Activated CD4-positive, alpha-beta memory T cell treated with anti-CD3 and anti-CD28 coated beads, Interleukin-2, amount 10 ng/mL, durations not matched to agents 7 days and 5 days (primary cell): ENCODE measurements at regions of chr11 and their contacts with region 1.

Region 1: GRCh38 chr11:102341844-102342318 is 5.1 kb upstream of the BIRC2 start:
- DNase-seq: peak; percentile 72
- H3K4me3 Mint-ChIP-seq: no peak overlapping the region
- H3K27ac Mint-ChIP-seq: no peak overlapping the region
- H3K4me1 Mint-ChIP-seq: peaks cover 20% of the 10 kb centered on the region
- H3K27me3 Mint-ChIP-seq: no peaks in the 10 kb centered on the region

Region 2: DNA sequence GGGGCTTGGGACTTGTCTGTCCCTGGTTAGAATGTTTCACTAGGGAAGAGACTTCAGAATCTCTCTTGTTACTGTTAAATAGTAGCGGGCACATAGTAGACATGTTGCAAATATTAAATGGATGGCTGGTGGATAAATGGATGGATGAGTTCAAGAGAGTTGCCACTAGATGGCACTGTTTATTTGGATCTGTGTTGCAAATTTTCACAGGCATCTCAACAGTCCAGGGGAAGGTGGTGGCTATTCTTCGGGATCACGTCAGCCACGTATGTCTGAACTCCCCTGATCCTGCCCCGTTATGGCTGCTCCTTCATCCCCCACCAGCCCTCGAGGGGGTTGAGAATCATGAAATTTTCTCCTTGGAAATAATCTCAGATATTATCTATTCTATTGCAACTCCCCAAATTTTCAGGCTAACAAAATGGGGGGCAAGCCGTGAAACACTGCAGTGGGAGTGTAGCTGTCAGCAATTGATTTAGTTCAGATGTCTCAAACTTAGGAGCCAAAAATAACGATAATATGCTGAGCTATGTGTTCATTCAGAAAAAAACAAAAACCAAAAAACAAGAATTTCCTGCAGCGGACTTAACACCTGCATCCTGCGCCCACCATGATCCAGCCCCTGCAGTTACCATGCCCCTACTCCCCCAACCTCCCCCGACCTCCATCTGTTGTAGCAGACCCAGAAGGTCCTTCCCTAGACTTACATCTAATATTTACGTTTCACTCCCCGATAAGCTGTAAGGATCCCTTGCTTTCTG is 53.7 kb before region 1 on chr11:
- CTCF ChIA-PET with region 1: interaction called, 53 read pairs
- POLR2A ChIA-PET with region 1: interaction called, 6 read pairs
- DNase-seq: no peak
- H3K4me3 Mint-ChIP-seq: no peak overlapping the region
- H3K27ac Mint-ChIP-seq: no peak overlapping the region
- H3K4me1 Mint-ChIP-seq: peaks cover 17% of the 10 kb centered on the region
- H3K27me3 Mint-ChIP-seq: no peaks in the 10 kb centered on the region

Region 3: GRCh38 chr11:102317099-102317767 is 24.6 kb before region 1 on chr11 and contains the start of gene BIRC3:
- CTCF ChIA-PET with region 1: interaction called, 31 read pairs
- POLR2A ChIA-PET with region 1: interaction called, 4 read pairs
- DNase-seq: peak; percentile 92
- H3K4me3 Mint-ChIP-seq: peak within 1 kb of the TSS; percentile 94
- H3K27ac Mint-ChIP-seq: peak within 1 kb of the TSS; percentile 91
- H3K4me1 Mint-ChIP-seq: peaks cover 69% of the 10 kb centered on the region
- H3K27me3 Mint-ChIP-seq: no peaks in the 10 kb centered on the region
- total RNA-seq, gene BIRC3: 79.0 to 80.0 TPM

Region 4: GRCh38 chr11:102367364-102367763 is 25.5 kb after region 1 on chr11:
- CTCF ChIA-PET with region 1: interaction called, 21 read pairs
- POLR2A ChIA-PET with region 1: interaction called, 5 read pairs
- DNase-seq: no peak
- H3K4me3 Mint-ChIP-seq: no peak overlapping the region
- H3K27ac Mint-ChIP-seq: no peak overlapping the region
- H3K4me1 Mint-ChIP-seq: peaks cover 25% of the 10 kb centered on the region
- H3K27me3 Mint-ChIP-seq: no peaks in the 10 kb centered on the region

Region 5: GRCh38 chr11:102396708-102397563 is 55.1 kb after region 1 on chr11:
- CTCF ChIA-PET with region 1: interaction called, 14 read pairs
- POLR2A ChIA-PET with region 1: no interaction called
- DNase-seq: no peak
- H3K4me3 Mint-ChIP-seq: no peak overlapping the region
- H3K27ac Mint-ChIP-seq: peak overlapping the region; percentile 52
- H3K4me1 Mint-ChIP-seq: peaks cover 20% of the 10 kb centered on the region
- H3K27me3 Mint-ChIP-seq: no peaks in the 10 kb centered on the region

Region 6: DNA sequence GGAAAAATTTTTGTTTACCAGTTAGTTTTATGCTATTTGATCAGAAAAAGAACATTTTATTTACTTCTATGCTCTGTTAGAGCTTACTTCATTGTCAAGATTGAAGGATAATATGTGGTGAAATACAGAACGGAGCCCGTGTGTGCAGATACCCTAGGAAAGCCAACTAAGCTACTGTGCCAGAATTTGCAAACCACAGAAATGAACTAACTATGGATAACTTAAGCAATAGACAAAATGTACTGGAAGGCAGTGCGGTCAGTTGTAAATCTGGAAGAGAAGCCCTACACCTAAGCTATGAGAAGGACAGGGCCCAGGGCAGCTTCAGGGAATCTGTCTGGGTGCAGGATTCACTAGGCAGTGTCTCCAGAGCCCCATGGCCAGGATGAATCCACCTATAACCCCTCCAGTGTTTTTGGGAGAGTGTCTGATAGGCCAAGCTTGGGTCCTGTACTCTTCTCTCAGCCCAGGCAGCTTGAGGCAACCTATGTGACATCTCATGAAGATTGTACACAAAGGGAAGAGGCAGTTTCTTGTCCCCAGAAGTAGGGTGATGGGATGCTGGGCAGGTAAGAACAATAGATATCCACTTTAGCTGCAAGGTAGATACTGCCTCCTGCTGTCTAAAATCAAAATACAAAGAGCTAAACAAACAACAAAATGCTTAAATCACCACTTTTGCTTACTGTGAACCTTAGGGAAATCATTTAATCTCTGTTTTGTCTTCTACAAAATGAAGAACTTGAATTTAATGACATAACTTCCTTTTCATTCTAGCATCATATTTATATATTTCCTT is 176.6 kb after region 1 on chr11:
- CTCF ChIA-PET with region 1: interaction called, 10 read pairs
- POLR2A ChIA-PET with region 1: no interaction called
- DNase-seq: no peak
- H3K4me3 Mint-ChIP-seq: no peak overlapping the region
- H3K27ac Mint-ChIP-seq: no peak overlapping the region
- H3K4me1 Mint-ChIP-seq: peaks cover 4% of the 10 kb centered on the region
- H3K27me3 Mint-ChIP-seq: peaks cover 15% of the 10 kb centered on the region

Region 7: DNA sequence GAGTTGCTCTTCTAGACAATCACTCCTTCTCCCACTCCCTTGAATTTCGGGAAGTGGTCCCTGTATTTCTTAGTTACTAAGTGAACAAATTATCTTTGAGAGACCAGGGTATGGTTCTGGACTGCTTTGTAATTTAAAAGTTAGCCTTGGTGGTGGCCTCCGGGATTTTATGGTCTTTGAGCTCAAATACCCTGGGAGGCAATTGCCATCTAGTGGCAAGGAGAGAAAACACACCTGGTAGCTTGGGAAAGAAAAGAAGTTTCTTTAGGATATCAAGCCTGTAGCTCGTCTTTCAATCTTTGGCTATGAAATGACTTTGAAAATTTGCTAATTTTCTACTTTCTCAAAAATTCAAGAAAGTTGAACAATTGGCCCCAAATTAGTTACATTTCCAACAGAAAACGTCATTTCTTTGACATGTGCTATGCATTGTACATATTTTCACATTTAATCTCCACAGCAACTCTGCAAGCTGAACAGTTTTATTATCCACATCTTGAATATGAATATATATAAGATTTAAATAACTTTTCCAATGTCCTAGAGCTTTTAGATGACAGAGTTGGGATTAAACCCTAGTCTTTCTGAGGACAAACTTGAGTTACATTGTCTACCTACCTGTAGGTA is 324.6 kb after region 1 on chr11:
- CTCF ChIA-PET with region 1: interaction called, 33 read pairs
- POLR2A ChIA-PET with region 1: no interaction called
- DNase-seq: no peak
- H3K4me3 Mint-ChIP-seq: no peak overlapping the region
- H3K27ac Mint-ChIP-seq: no peak overlapping the region
- H3K4me1 Mint-ChIP-seq: no peaks in the 10 kb centered on the region
- H3K27me3 Mint-ChIP-seq: peaks cover 5% of the 10 kb centered on the region